Activated CD8-positive, alpha-beta T cell treated with anti-CD3 and anti-CD28 coated beads, Interleukin-2, amount 10 ng/mL, durations not matched to agents 7 days and 5 days (primary cell): ENCODE measurements at regions of chr14 and their contacts with region 1.

Region 1: GRCh38 chr14:77799863-77800730 is at the start of gene ADCK1:
- DNase-seq: peak; percentile 90
- ATAC-seq: peak; percentile 93
- H3K4me3 Mint-ChIP-seq: peak within 1 kb of the TSS; percentile 82
- H3K27ac Mint-ChIP-seq: peak within 1 kb of the TSS; percentile 71
- H3K4me1 Mint-ChIP-seq: peaks cover 9% of the 10 kb centered on the region
- H3K27me3 Mint-ChIP-seq: peaks cover 2% of the 10 kb centered on the region
- total RNA-seq, gene ADCK1: 2.7 to 3.3 TPM

Region 2: DNA sequence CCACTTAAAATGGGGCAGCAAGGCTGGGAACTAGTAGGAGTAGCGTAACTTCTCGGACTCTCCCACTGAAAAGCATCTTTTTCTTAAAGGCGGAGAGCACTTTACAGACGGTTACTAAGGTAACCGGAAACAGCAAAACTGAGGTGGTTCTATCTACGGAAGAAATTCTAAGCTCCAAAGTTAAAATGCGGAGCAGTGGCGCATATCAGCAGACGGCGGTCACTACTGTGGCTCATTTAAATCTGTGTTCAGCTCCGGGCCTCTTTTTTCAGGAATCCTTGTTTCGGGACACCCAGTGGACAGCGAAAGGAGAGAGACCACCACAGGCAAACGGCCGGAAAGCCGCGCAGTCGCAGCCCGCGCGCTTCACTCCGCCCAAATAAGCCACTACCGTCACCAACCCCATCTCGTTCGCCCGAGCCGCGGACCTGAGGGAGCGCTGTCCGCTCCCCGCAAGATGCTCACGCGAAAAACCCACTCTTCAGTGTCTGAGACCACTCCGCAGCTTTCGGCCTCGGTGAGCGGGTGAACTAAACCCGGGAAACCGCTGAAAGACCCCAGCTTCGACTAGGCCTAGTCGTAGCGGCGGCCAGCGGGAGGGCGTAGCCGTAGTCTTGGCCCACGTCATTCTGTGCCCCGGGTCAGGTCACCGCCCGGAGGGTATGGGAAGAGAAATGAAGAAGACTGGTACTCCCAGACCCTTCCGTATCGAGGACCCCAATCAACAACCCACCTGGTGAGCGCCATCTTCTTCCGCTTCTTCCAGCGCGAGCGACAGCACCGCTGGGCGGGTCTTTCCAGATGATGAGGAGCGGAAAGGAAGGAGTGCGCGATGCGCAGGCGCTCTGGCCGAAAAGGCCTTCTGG is 39.5 kb before region 1 on chr14 and contains the start of gene SNW1:
- CTCF ChIA-PET with region 1: interaction called, 4 read pairs
- POLR2A ChIA-PET with region 1: interaction called, 16 read pairs
- DNase-seq: peak; percentile 96
- ATAC-seq: peak; percentile 87
- H3K4me3 Mint-ChIP-seq: peak within 1 kb of the TSS; percentile 98
- H3K27ac Mint-ChIP-seq: peak within 1 kb of the TSS; percentile 98
- H3K4me1 Mint-ChIP-seq: peaks cover 33% of the 10 kb centered on the region
- H3K27me3 Mint-ChIP-seq: no peaks in the 10 kb centered on the region
- total RNA-seq, gene SNW1: 94.4 to 100 TPM